B cell (primary cell): ENCODE measurements at regions of chr6 and their contacts with region 1.

Region 1: DNA sequence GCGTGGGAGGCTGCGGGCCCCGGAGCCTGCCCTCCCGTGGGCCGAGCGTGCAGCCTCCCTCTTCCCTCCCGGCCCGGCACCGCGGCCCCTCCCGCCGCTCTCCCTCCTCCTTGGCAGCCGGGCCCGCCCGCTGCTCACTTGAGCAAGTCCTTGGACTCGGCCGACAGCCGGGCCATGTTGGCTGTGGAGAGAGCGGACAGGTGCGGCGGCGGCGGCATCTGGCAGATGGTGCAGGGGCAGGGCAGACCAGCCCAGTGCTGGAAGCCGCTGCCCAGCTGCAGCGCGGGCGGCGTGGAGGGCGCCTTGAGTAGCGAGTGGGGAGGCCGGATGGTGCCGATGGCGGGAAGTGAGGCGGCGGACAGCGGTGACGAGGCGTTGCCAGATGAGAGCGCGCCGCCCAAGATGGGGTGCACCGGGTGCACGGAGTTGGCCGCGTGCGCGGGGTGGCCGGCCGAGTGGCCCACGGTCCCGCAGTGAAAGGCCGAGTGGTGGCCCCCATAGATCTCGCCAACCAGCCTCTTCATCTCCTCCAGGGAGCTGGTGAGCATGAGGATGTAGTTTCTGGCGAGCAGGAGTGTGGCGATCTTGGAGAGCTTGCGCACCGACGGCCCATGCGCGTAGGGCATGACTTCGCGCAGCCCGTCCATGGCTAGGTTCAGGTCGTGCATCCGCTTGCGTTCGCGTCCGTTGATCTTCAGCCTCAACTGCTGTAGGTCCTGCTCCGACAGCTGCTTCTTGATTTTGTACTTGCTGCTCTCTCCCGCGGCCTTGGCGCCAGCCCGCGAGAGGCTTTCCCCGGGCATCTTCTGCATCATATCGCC is 766 bp downstream of the OLIG3 start:
- DNase-seq: peak; percentile 53
- ATAC-seq: no peak
- H3K4me3 ChIP-seq: no peak overlapping the region
- H3K4me3 Mint-ChIP-seq: peak overlapping the region; percentile 53
- H3K27ac ChIP-seq: no peak overlapping the region
- H3K27ac Mint-ChIP-seq: peak overlapping the region; percentile 71
- H3K4me1 ChIP-seq: peaks cover 77 to 84% of the 10 kb centered on the region in 2 donors
- H3K4me1 Mint-ChIP-seq: peaks cover 69% of the 10 kb centered on the region
- H3K27me3 ChIP-seq: peaks cover 8 to 99% (median 90%) of the 10 kb centered on the region in 4 experiments
- H3K27me3 Mint-ChIP-seq: peaks cover 82% of the 10 kb centered on the region
- CTCF ChIP-seq: no peak

Region 2: DNA sequence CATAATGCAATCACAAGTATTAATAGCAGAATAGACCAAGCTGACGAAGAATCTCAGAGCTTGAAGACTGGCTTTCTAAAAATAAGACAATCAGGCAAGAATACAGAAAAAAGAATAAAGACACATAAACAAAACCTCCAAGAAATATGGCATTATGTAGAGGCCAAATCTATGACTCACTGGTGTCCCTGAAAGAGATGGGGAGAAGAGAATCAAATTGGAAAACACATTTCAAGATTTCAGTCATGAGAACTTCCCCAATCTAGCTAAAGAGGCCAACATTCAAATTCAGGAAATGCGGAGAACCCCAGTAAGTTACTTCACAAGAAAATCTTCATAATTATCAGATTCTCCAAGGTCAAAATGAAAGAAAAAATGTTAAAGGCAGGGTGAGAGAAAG is 1710.9 kb before region 1 on chr6:
- CTCF ChIA-PET with region 1: no interaction called
- POLR2A ChIA-PET with region 1: no interaction called
- intact Hi-C with region 1: no loop called
- DNase-seq: no peak
- ATAC-seq: no peak
- H3K4me3 ChIP-seq: no peak overlapping the region
- H3K4me3 Mint-ChIP-seq: no peak overlapping the region
- H3K27ac ChIP-seq: no peak overlapping the region
- H3K27ac Mint-ChIP-seq: no peak overlapping the region
- H3K4me1 ChIP-seq: no peaks in the 10 kb centered on the region
- H3K4me1 Mint-ChIP-seq: no peaks in the 10 kb centered on the region
- H3K27me3 ChIP-seq: no peaks in the 10 kb centered on the region
- H3K27me3 Mint-ChIP-seq: peaks cover 8% of the 10 kb centered on the region
- CTCF ChIP-seq: no peak

Region 3: DNA sequence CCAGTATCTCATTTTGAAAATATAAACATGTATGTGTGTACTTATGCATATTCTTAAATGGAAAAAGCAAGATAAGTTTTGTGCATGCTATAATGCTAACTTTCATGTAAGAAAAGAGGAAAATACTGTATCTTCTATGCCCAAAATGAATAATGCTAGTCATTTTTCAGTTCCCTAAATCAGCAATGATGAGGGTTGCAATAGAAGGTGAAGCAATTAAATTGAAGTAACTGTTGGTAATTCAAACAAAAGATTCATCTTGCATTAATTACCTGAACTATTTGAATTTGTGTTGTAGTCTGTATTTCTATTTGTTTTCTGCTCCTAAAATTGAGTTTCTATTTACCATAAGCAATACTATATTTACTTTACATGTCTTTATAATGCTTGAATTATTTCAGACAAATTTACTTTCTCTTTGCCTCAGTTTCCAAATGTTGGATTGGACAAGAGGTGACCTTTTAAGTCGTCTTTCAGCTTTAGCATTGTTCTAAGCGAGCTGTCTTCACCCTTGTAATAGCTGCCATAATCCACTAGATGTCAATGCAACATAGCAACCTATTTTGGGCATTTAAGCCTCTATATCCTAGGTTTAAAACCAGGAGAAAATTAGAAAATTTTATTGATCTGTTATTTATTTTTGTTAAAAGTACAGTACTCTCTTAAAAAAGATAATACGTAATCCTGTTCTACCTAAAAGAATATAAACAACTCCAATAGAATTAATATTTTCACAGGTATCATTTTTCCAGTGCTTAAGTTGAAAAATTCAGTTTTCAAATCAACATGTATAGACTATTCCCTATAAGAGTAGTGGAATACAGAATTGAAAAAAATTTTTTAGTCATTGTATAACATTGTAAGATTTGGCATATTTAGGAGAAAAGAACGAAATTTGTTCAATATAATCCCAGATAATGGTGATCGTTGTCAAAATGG is 221.9 kb before region 1 on chr6:
- CTCF ChIA-PET with region 1: no interaction called
- POLR2A ChIA-PET with region 1: no interaction called
- intact Hi-C with region 1: loop called (anchors 10 kb)
- DNase-seq: peak; percentile 63
- ATAC-seq: peak; percentile 72
- H3K4me3 ChIP-seq: no peak overlapping the region
- H3K4me3 Mint-ChIP-seq: no peak overlapping the region
- H3K27ac ChIP-seq: no peak overlapping the region
- H3K27ac Mint-ChIP-seq: no peak overlapping the region
- H3K4me1 ChIP-seq: peaks cover 5 to 14% of the 10 kb centered on the region in 2 donors
- H3K4me1 Mint-ChIP-seq: peaks cover 15% of the 10 kb centered on the region
- H3K27me3 ChIP-seq: no peaks in the 10 kb centered on the region
- H3K27me3 Mint-ChIP-seq: no peaks in the 10 kb centered on the region
- CTCF ChIP-seq: peak; percentile 93

Region 4: GRCh38 chr6:137432054-137432611 is 61.3 kb before region 1 on chr6:
- CTCF ChIA-PET with region 1: no interaction called
- POLR2A ChIA-PET with region 1: no interaction called
- intact Hi-C with region 1: loop called (anchors 5 kb)
- DNase-seq: peak; percentile 64
- ATAC-seq: peak; percentile 67
- H3K4me3 ChIP-seq: peak overlapping the region in 1 of 5 experiments; percentile 42
- H3K4me3 Mint-ChIP-seq: peak overlapping the region; percentile 78
- H3K27ac ChIP-seq: no peak overlapping the region
- H3K27ac Mint-ChIP-seq: peak overlapping the region; percentile 2
- H3K4me1 ChIP-seq: peaks cover 34 to 35% of the 10 kb centered on the region in 2 donors
- H3K4me1 Mint-ChIP-seq: peaks cover 34% of the 10 kb centered on the region
- H3K27me3 ChIP-seq: no peaks in the 10 kb centered on the region
- H3K27me3 Mint-ChIP-seq: no peaks in the 10 kb centered on the region
- CTCF ChIP-seq: no peak

Region 5: GRCh38 chr6:137610702-137611101 is 117.3 kb after region 1 on chr6:
- CTCF ChIA-PET with region 1: no interaction called
- POLR2A ChIA-PET with region 1: no interaction called
- intact Hi-C with region 1: no loop called
- DNase-seq: no peak
- ATAC-seq: no peak
- H3K4me3 ChIP-seq: no peak overlapping the region
- H3K4me3 Mint-ChIP-seq: no peak overlapping the region
- H3K27ac ChIP-seq: no peak overlapping the region
- H3K27ac Mint-ChIP-seq: no peak overlapping the region
- H3K4me1 ChIP-seq: no peaks in the 10 kb centered on the region
- H3K4me1 Mint-ChIP-seq: no peaks in the 10 kb centered on the region
- H3K27me3 ChIP-seq: peaks cover 0 to 14% (median 9%) of the 10 kb centered on the region in 4 experiments
- H3K27me3 Mint-ChIP-seq: peaks cover 29% of the 10 kb centered on the region
- CTCF ChIP-seq: no peak

Region 6: GRCh38 chr6:138109042-138109997 is 615.9 kb after region 1 on chr6:
- CTCF ChIA-PET with region 1: no interaction called
- POLR2A ChIA-PET with region 1: no interaction called
- intact Hi-C with region 1: loop called (anchors 5 kb)
- DNase-seq: peak; percentile 81
- ATAC-seq: peak; percentile 66
- H3K4me3 ChIP-seq: no peak overlapping the region
- H3K4me3 Mint-ChIP-seq: peak overlapping the region; percentile 11
- H3K27ac ChIP-seq: no peak overlapping the region
- H3K27ac Mint-ChIP-seq: no peak overlapping the region
- H3K4me1 ChIP-seq: peaks cover 14 to 19% of the 10 kb centered on the region in 2 donors
- H3K4me1 Mint-ChIP-seq: peaks cover 18% of the 10 kb centered on the region
- H3K27me3 ChIP-seq: peaks cover 0 to 42% (median 33%) of the 10 kb centered on the region in 4 experiments
- H3K27me3 Mint-ChIP-seq: peaks cover 48% of the 10 kb centered on the region
- CTCF ChIP-seq: peak; percentile 99